ENCODE measurements at regions of chr12 and their contacts with region 1.

Region 1: DNA sequence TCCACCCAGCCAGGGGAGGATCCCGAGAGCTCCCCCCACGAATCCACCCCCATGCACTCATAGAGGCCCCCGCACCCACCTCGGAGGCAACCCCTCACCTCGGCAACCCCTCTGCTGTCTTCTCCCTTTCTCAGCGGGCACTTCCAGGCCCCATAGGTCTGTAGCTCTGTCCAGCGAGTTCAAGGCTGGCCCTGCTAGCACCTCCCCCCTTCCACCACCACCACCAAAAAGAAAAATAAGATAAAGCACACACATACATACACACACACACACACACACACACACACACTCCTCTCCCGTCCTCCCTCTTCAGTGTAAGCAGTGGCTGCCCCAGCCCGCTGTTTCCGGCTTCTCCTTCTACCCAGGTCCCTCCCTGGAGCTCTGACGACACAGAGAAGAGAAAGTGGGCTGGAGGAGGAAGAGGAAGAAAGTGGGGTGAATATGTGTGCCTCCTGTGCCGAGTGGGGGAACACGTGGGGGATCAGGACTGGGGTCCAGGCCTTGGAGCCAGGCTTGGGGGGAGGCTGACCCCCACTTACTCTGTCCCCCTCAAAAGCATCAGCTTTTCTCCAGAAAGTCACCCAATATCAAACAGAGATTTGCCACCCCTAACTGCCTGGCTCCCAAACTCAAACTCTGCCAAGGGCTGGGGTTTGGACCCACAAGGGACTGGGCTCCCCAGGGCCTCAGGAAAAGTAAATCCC is at the start of gene STAT6:
- DNase-seq: no peak
- H3K4me3 ChIP-seq: peak within 1 kb of the TSS; percentile 6 to 46; a peak in 2 of 4 replicates
- H3K27ac ChIP-seq: peak within 1 kb of the TSS; percentile 3 to 28; a peak in 2 of 4 replicates
- H3K4me1 ChIP-seq: peaks cover 0 to 9% of the 10 kb centered on the region in 2 experiments; a peak in 2 of 4 replicates
- H3K27me3 ChIP-seq: no peaks in the 10 kb centered on the region
- CTCF ChIP-seq: 0 out of 2 replicates have a peak, but pooled peaks have one; percentile 9
- EP300 ChIP-seq: no peak
- RAD21 ChIP-seq: peak; percentile 23; the same call in 1 of the 2 replicates
- polyA plus RNA-seq, gene STAT6: 0.15 and 0.42 TPM in 2 replicates

Region 2: GRCh38 chr12:57005980-57006808 is 105.0 kb before region 1 on chr12 and contains the start of gene ZBTB39:
- CTCF ChIA-PET with region 1: interaction called, 43 read pairs
- POLR2A ChIA-PET with region 1: no interaction called
- DNase-seq: peak; percentile 99
- H3K4me3 ChIP-seq: peak within 1 kb of the TSS; percentile 89 to 100
- H3K27ac ChIP-seq: peak within 1 kb of the TSS; percentile 34 to 69; a peak in 2 of 4 replicates
- H3K4me1 ChIP-seq: peaks cover 6 to 14% of the 10 kb centered on the region in 2 experiments; a peak in 3 of 4 replicates
- H3K27me3 ChIP-seq: no peaks in the 10 kb centered on the region
- CTCF ChIP-seq: peak; percentile 69
- EP300 ChIP-seq: no peak
- RAD21 ChIP-seq: no peak
- polyA plus RNA-seq, gene ZBTB39: 3.7 and 4.8 TPM in 2 replicates

Region 3: DNA sequence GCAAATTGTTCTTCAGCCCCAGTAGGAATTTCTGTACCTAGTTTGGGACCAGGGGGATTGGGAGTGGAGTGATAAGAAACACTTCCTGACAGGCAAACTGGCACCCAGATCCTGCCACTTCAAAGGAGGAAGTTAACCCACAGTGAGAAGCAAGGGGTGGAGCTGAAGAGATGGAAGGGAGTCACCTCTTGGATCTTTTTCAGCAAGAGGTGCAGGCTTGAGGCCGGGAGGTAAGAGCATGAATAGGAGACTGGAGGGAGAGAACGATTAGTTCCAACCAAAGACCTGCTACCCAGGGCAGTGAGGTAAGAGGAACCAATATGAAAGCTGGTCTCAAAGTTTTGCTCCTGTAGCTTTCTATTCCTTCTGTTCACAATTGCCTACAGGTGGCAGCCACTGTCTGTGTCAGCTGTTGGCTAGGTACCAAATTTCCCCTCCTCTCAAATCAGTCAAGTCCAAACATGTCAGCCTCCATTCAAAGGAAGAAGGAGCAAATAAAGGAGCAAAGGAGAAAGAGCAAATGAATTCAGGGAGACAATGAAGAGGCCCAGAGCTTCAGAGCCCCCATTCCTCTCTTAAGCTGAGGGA is 80.0 kb before region 1 on chr12:
- CTCF ChIA-PET with region 1: interaction called, 30 read pairs
- POLR2A ChIA-PET with region 1: no interaction called
- DNase-seq: no peak
- H3K4me3 ChIP-seq: no peak overlapping the region
- H3K27ac ChIP-seq: no peak overlapping the region
- H3K4me1 ChIP-seq: peaks cover 0 to 48% of the 10 kb centered on the region in 2 experiments; a peak in 2 of 4 replicates
- H3K27me3 ChIP-seq: peaks cover 5% of the 10 kb centered on the region; the same call in 1 of the 2 replicates
- CTCF ChIP-seq: no peak
- EP300 ChIP-seq: no peak
- RAD21 ChIP-seq: peak; percentile 43

Region 4: DNA sequence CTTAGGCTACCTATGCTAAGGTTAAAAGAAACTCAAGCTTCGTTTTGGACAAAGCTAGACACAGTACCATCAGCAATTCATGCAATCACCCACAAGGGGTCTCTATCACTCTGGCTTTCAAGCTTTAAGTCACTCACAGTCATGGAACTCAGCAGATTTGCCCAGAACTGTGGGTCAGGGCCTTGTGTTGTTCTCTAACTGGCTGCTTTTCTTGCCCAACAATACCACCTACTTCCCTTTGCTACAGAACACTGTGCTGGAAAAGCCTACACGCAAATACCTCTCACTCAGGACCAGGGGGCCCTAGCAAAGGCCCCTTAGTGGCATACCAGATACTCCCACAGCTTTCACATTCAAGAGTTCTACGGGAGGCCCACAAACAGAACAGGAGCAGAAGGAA is 41.7 kb before region 1 on chr12:
- CTCF ChIA-PET with region 1: interaction called, 339 read pairs
- POLR2A ChIA-PET with region 1: interaction called, 23 read pairs
- DNase-seq: peak; percentile 59
- H3K4me3 ChIP-seq: no peak overlapping the region; a peak in 1 of 4 replicates
- H3K27ac ChIP-seq: no peak overlapping the region
- H3K4me1 ChIP-seq: peaks cover 0 to 2% of the 10 kb centered on the region in 2 experiments; a peak in 1 of 4 replicates
- H3K27me3 ChIP-seq: no peaks in the 10 kb centered on the region
- CTCF ChIP-seq: peak; percentile 84
- EP300 ChIP-seq: no peak
- RAD21 ChIP-seq: peak; percentile 96

Region 5: GRCh38 chr12:57088459-57089248 is 22.5 kb before region 1 on chr12 and contains the start of gene NAB2:
- CTCF ChIA-PET with region 1: interaction called, 107 read pairs
- POLR2A ChIA-PET with region 1: no interaction called
- DNase-seq: peak; percentile 96
- H3K4me3 ChIP-seq: peak within 1 kb of the TSS; percentile 77 to 90
- H3K27ac ChIP-seq: peak within 1 kb of the TSS; percentile 96 to 98
- H3K4me1 ChIP-seq: peaks cover 22 to 23% of the 10 kb centered on the region in 2 experiments; a peak in 2 of 4 replicates
- H3K27me3 ChIP-seq: no peaks in the 10 kb centered on the region
- CTCF ChIP-seq: no peak
- EP300 ChIP-seq: no peak
- RAD21 ChIP-seq: no peak
- polyA plus RNA-seq, gene NAB2: 23.7 and 24.9 TPM in 2 replicates

Region 6: GRCh38 chr12:57175428-57176138 is 64.4 kb after region 1 on chr12:
- CTCF ChIA-PET with region 1: interaction called, 643 read pairs
- POLR2A ChIA-PET with region 1: no interaction called
- DNase-seq: peak; percentile 92
- H3K4me3 ChIP-seq: no peak overlapping the region; a peak in 1 of 4 replicates
- H3K27ac ChIP-seq: peak overlapping the region in 1 of 2 experiments; percentile 67; a peak in 2 of 4 replicates
- H3K4me1 ChIP-seq: peaks cover 0 to 16% of the 10 kb centered on the region in 2 experiments; a peak in 1 of 4 replicates
- H3K27me3 ChIP-seq: no peaks in the 10 kb centered on the region
- CTCF ChIP-seq: peak; percentile 88
- EP300 ChIP-seq: no peak
- RAD21 ChIP-seq: peak; percentile 79